B cell (primary cell): ENCODE measurements at regions of chr10 and their contacts with region 1.

Region 1: DNA sequence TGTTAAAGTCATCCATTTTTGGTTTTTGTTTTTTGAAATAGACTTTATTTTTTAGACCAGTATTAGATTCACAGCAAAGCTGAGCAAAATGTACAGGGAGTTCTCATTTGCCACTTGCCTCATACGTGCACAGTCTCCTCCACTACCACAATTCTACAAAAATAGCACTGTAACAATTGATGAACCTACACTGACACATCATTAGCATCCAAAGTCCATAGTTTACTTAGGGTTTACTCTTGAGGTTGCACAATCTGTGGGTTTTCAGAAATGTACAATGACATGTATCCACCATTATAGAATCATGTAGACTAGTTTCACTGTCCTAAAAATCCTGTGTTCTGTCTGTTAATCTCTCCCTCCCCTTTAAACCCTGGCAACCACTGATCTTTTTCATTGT is 125.8 kb upstream of the PDSS1 start:
- DNase-seq: no peak
- ATAC-seq: no peak
- H3K4me3 ChIP-seq: no peak overlapping the region
- H3K4me3 Mint-ChIP-seq: no peak overlapping the region
- H3K27ac ChIP-seq: no peak overlapping the region
- H3K27ac Mint-ChIP-seq: no peak overlapping the region
- H3K4me1 ChIP-seq: peaks cover 14 to 17% of the 10 kb centered on the region in 2 donors
- H3K4me1 Mint-ChIP-seq: peaks cover 28% of the 10 kb centered on the region
- H3K27me3 ChIP-seq: no peaks in the 10 kb centered on the region
- H3K27me3 Mint-ChIP-seq: no peaks in the 10 kb centered on the region
- CTCF ChIP-seq: no peak

Region 2: DNA sequence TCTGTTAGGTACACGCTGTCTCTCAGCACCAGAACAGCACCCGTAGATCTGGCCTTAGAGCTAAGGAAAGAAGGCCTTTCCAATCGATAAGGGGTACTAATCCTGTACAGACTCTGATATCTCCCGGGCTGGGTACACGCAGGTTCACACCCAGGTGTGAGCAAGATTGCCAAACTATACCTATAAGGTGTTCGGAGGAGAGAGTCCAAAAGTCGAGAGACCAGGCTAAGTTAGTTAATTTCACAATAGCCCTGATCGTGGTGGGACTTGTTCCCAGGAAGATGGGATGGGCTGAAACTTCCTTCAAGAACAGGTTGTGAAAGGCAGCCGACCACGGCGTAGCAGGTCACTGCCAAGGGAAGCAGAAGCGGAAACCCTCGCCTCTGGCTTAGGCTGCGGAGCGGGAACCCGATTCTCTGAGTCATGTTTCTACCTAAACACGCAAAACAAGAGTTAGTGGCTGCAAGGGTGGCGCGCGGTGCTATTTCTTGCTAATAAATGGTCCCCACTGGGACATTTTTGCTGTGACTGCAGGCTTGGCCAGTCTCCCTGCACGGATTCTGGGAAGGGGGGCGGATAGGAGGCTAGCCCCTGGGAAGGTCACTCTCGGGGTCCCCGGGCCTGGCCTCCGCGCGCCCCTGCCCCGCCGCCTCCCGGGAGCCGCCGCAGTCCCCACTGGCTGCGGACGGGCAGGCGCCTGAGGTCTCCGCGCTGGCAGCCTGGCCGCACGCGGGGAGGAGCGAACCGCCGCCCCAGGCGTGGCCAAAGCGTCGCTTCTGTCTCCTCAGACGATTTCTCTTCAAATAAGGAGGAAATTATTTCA is 50.4 kb after region 1 on chr10:
- CTCF ChIA-PET with region 1: no interaction called
- POLR2A ChIA-PET with region 1: no interaction called
- intact Hi-C with region 1: loop called (anchors 1 kb)
- DNase-seq: peak; percentile 16
- ATAC-seq: peak; percentile 31
- H3K4me3 ChIP-seq: peak overlapping the region in 3 of 5 experiments; percentile 23 to 50 (median 31)
- H3K4me3 Mint-ChIP-seq: peak overlapping the region; percentile 38
- H3K27ac ChIP-seq: no peak overlapping the region
- H3K27ac Mint-ChIP-seq: no peak overlapping the region
- H3K4me1 ChIP-seq: peaks cover 8 to 12% of the 10 kb centered on the region in 2 donors
- H3K4me1 Mint-ChIP-seq: peaks cover 7% of the 10 kb centered on the region
- H3K27me3 ChIP-seq: peaks cover 0 to 21% (median 14%) of the 10 kb centered on the region in 4 experiments
- H3K27me3 Mint-ChIP-seq: peaks cover 39% of the 10 kb centered on the region
- CTCF ChIP-seq: no peak